ENCODE measurements at regions of chr1 and their contacts with region 1.

Region 1: DNA sequence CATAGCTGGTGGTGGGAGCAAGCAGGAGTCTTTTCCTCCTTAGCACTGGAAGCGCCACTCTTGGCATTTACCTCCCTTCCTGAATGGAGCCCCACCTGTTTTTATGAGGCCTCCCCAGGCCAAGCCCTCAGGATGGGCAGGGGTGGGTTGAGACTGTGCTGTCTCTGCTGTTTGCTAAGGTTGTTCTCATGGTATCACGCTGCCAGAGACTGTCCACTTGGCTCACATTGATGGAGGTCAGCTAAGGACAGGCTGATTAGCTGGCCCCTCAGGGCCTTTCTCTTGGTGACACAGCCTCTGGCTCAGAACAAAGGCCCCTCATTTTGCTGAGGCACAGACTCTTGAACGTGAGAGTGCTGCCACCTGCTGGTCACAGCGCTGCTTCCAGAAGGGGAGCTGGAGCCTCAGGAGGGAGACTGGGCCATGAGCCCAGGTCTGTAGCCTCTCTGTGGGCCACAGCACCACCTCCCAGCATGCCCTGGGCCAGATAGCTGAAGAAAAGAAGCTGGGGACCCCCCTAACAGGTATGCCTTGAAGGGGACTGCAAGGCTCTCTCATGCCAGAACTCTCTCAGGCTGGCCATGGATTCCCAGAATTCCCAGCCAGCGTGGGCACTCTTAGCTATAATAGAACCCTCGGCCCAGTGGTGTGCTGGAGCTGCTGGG is 85.6 kb downstream of the CD58 start:
- DNase-seq: peak; percentile 56
- H3K4me3 ChIP-seq: no peak overlapping the region
- H3K27ac ChIP-seq: no peak overlapping the region
- H3K27me3 ChIP-seq: peaks cover 5% of the 10 kb centered on the region
- CTCF ChIP-seq: peak; percentile 90

Region 2: DNA sequence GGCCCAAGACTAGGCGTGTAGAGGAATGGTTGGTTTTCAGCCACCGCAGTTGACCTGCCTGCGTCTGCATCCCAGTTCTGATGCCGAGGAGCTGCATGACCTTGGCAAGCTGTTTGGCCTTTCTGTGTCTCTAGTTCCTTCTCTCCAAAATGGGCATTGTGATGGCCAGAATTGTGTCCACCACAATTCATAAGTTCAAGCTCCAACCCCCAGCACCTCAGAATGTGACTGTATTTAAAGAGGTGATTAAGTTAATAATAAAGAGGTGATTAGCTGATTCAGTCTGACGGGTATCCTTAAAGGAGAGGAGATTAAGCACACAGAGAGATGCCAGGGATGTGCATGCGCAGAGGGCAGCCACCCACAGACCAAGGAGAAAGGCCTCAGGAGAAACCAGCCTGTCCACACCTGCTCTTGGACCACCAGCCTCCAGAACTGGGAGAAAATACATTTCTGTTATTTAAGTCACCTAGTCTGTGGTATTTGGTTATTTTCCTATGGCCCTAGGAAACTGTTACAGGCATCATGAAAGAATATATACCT is 345.5 kb before region 1 on chr1:
- CTCF ChIA-PET with region 1: interaction called, 200 read pairs
- POLR2A ChIA-PET with region 1: no interaction called
- DNase-seq: no peak
- H3K4me3 ChIP-seq: no peak overlapping the region
- H3K27ac ChIP-seq: no peak overlapping the region
- H3K27me3 ChIP-seq: no peaks in the 10 kb centered on the region
- CTCF ChIP-seq: no peak

Region 3: DNA sequence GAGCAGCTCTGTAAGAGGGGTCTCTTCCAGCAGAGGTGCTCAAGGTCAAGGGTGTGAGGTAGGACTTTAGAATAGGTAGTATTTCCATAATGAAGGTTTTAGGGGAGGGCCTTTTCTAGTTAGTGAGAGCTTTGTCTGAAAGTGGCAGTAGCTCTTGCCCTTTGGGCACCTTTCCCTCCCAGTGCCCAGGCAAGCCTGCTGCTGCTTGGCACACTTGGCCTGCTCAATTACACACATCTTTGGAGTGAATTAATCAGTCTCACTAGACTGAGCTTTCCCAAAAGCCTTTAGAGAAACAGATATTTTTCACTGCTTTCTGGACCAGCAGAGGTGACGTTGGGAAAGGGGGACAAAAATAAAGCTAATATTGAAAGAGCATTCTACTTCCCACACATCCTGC is 326.0 kb before region 1 on chr1:
- CTCF ChIA-PET with region 1: interaction called, 70 read pairs
- POLR2A ChIA-PET with region 1: no interaction called
- DNase-seq: no peak
- H3K4me3 ChIP-seq: no peak overlapping the region
- H3K27ac ChIP-seq: no peak overlapping the region
- H3K27me3 ChIP-seq: peaks cover 7% of the 10 kb centered on the region
- CTCF ChIP-seq: no peak

Region 4: GRCh38 chr1:116325922-116326321 is 159.3 kb before region 1 on chr1:
- CTCF ChIA-PET with region 1: no interaction called
- POLR2A ChIA-PET with region 1: no interaction called
- DNase-seq: no peak
- H3K4me3 ChIP-seq: no peak overlapping the region
- H3K27ac ChIP-seq: no peak overlapping the region
- H3K27me3 ChIP-seq: peaks cover 3% of the 10 kb centered on the region
- CTCF ChIP-seq: no peak

Region 5: DNA sequence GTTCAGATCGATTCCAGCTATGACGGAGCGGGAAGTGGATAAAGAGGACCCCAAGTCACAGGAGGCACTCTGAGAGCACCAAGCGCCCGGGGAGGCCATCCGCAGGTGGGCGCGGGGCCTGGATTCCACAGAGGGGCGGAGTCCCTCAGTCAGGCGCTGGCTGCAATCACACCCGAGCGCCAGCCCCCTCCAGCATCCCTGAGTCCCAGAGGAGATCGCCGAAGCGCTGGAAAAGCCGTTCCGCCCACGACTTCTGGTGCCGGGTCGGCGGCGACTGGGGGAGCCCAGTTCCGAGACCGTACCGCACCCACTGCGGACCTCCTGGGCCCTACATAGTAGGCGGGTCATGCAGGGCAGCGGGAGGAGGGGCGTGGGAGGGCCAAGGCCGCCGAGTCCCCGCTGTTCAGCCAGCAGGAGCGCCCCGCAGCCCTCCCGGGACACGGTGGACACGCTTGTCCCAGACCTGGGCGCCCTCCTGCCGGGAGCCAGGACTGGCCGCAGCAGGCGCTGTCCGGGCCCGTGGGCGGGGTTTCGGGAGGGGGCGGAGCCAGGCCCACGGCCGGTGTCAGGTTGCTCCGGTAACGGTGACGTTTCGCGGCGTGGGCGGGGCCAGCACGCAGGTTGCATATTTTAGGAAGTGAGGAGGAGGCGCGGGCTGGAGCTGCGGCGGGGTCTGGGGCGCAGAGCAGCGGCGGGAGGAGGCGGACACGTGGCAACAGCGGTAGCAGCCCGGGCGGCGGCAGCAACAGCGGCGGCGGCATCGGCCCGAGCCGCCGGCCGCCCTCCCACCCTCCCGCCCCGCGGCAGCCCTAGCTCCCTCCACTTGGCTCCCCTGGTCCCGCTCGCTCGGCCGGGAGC is 112.4 kb before region 1 on chr1 and contains the start of gene ATP1A1:
- CTCF ChIA-PET with region 1: interaction called, 21 read pairs
- POLR2A ChIA-PET with region 1: interaction called, 4 read pairs
- DNase-seq: peak; percentile 59
- H3K4me3 ChIP-seq: peak within 1 kb of the TSS; percentile 80
- H3K27ac ChIP-seq: peak within 1 kb of the TSS; percentile 57
- H3K27me3 ChIP-seq: peaks cover 22% of the 10 kb centered on the region
- CTCF ChIP-seq: peak; percentile 6; the same call in 1 of the 2 replicates
- polyA plus RNA-seq, gene ATP1A1: 189 and 194 TPM in 2 replicates

Region 6: GRCh38 chr1:116418091-116418830 is 66.9 kb before region 1 on chr1:
- CTCF ChIA-PET with region 1: interaction called, 15 read pairs
- POLR2A ChIA-PET with region 1: interaction called, 4 read pairs
- DNase-seq: peak; percentile 49
- H3K4me3 ChIP-seq: peak overlapping the region; percentile 94
- H3K27ac ChIP-seq: no peak overlapping the region
- H3K27me3 ChIP-seq: peaks cover 2% of the 10 kb centered on the region
- CTCF ChIP-seq: no peak

Region 7: GRCh38 chr1:116472431-116472961 is 12.7 kb before region 1 on chr1:
- CTCF ChIA-PET with region 1: interaction called, 31 read pairs
- POLR2A ChIA-PET with region 1: no interaction called
- DNase-seq: no peak
- H3K4me3 ChIP-seq: no peak overlapping the region
- H3K27ac ChIP-seq: no peak overlapping the region
- H3K27me3 ChIP-seq: peaks cover 2% of the 10 kb centered on the region
- CTCF ChIP-seq: no peak

Region 8: GRCh38 chr1:116504308-116505156 is 19.3 kb after region 1 on chr1:
- CTCF ChIA-PET with region 1: interaction called, 184 read pairs
- POLR2A ChIA-PET with region 1: no interaction called
- DNase-seq: no peak
- H3K4me3 ChIP-seq: no peak overlapping the region
- H3K27ac ChIP-seq: peak overlapping the region; percentile 22
- H3K27me3 ChIP-seq: no peaks in the 10 kb centered on the region
- CTCF ChIP-seq: no peak

Region 9: DNA sequence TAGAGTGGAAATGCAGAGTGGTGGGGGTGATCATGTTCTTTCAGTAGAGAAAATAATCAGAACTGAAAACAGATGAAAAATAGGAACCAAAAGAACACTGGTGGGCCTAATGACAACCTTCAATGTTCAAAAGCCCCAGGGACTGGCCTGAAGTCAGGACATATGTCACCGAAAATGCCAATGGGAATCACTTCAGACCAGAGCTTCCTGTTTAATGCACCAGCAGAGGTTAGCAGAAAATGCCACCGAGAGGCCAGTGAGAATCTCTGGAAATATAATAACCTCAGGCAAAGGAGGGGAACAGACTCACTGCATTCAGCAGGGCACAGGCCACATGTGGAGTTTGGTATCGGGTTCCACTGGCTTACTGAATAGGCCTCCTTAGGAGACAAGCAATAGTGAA is 101.5 kb after region 1 on chr1:
- CTCF ChIA-PET with region 1: no interaction called
- POLR2A ChIA-PET with region 1: no interaction called
- DNase-seq: no peak
- H3K4me3 ChIP-seq: no peak overlapping the region
- H3K27ac ChIP-seq: no peak overlapping the region
- H3K27me3 ChIP-seq: no peaks in the 10 kb centered on the region
- CTCF ChIP-seq: no peak

Region 10: GRCh38 chr1:117026361-117026760 is 541.2 kb after region 1 on chr1:
- CTCF ChIA-PET with region 1: no interaction called
- POLR2A ChIA-PET with region 1: no interaction called
- DNase-seq: no peak
- H3K4me3 ChIP-seq: no peak overlapping the region
- H3K27ac ChIP-seq: no peak overlapping the region
- H3K27me3 ChIP-seq: peaks cover 3% of the 10 kb centered on the region
- CTCF ChIP-seq: no peak